ENCODE measurements at regions of chr3 and their contacts with region 1.

Region 1: GRCh38 chr3:189961525-189962161 is 159.1 kb downstream of the P3H2 start:
- DNase-seq: peak; percentile 67
- ATAC-seq: peak; percentile 78
- H3K4me3 ChIP-seq: no peak overlapping the region; a peak in 1 of 6 replicates
- H3K27ac ChIP-seq: no peak overlapping the region
- H3K4me1 ChIP-seq: no peaks in the 10 kb centered on the region
- H3K27me3 ChIP-seq: no peaks in the 10 kb centered on the region
- CTCF ChIP-seq: peak; percentile 90
- EP300 ChIP-seq: peak in 1 of 2 experiments; percentile 76; a peak in 2 of 4 replicates
- POLR2A ChIP-seq: no peak
- RAD21 ChIP-seq: peak; percentile 57; the same call in 1 of the 2 replicates

Region 2: DNA sequence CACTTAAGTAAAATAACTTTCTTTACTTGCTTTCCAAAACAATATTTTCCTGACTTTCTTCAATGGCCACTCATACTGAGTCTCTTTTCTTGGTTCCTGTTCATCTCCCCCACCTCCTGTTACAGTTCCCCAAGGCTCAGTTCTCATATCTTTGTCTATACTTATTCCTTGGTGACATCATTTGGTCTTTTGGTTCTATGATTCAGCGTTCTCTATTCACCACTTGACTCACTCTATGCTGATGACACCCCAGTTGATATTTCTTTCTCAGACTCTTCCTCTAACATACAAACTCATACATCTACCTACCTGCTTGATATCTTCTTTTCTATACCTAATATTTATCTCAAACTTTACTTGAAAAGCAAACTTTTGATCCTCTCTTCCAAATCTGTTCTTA is 244.1 kb after region 1 on chr3:
- CTCF ChIA-PET with region 1: interaction called, 14 read pairs
- POLR2A ChIA-PET with region 1: no interaction called
- in situ Hi-C with region 1: no loop called
- intact Hi-C with region 1: loop called (anchors 1 kb)
- DNase-seq: no peak
- ATAC-seq: no peak
- H3K4me3 ChIP-seq: no peak overlapping the region
- H3K27ac ChIP-seq: no peak overlapping the region
- H3K4me1 ChIP-seq: no peaks in the 10 kb centered on the region
- H3K27me3 ChIP-seq: no peaks in the 10 kb centered on the region; a peak in 1 of 5 replicates
- CTCF ChIP-seq: no peak
- EP300 ChIP-seq: no peak
- POLR2A ChIP-seq: no peak
- RAD21 ChIP-seq: no peak

Region 3: DNA sequence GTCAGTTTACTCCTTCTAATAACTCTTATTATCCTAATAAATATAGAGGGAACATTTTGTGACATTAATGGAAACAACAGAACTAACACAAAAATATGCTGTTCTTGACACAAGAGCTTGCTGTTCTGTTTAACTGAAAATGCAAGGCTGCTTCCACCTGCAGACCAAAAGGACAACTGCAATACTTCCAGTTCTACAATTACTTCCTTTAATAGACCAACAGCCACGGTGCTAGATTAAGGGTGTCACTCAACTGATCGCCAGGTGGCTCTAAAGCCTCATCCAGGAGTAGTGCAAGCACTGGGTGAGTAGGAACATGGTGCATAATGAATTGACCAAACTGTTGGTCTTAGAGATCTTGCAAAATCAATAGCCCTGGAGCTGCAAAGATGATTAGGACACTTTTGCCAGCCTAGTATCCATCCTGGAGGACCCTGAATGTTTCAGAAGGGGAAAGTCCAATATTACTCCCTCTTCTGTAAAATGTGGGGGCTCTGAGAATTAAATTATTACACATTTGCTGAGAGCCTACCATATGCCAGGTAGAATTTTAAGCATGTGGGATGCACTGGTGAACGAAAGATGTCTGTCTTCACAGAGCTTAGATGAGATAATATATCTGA is 422.7 kb after region 1 on chr3:
- CTCF ChIA-PET with region 1: no interaction called
- POLR2A ChIA-PET with region 1: no interaction called
- in situ Hi-C with region 1: no loop called
- intact Hi-C with region 1: loop called (anchors 2 kb)
- DNase-seq: peak; percentile 83
- ATAC-seq: peak; percentile 100
- H3K4me3 ChIP-seq: no peak overlapping the region
- H3K27ac ChIP-seq: no peak overlapping the region
- H3K4me1 ChIP-seq: peaks cover 30% of the 10 kb centered on the region
- H3K27me3 ChIP-seq: 0 out of 5 replicates have a peak, but pooled peaks cover 0 to 1% of the 10 kb centered on the region in 2 experiments
- CTCF ChIP-seq: peak; percentile 89
- EP300 ChIP-seq: no peak
- POLR2A ChIP-seq: no peak
- RAD21 ChIP-seq: peak; percentile 84

Region 4: GRCh38 chr3:190443257-190443656 is 481.6 kb after region 1 on chr3:
- CTCF ChIA-PET with region 1: no interaction called
- POLR2A ChIA-PET with region 1: no interaction called
- in situ Hi-C with region 1: no loop called
- intact Hi-C with region 1: loop called (anchors 5 kb)
- DNase-seq: peak; percentile 13
- ATAC-seq: no peak
- H3K4me3 ChIP-seq: no peak overlapping the region
- H3K27ac ChIP-seq: no peak overlapping the region
- H3K4me1 ChIP-seq: peaks cover 19% of the 10 kb centered on the region
- H3K27me3 ChIP-seq: no peaks in the 10 kb centered on the region
- CTCF ChIP-seq: peak; percentile 34; the same call in 1 of the 2 replicates
- EP300 ChIP-seq: no peak
- POLR2A ChIP-seq: no peak
- RAD21 ChIP-seq: no peak

Region 5: GRCh38 chr3:190701096-190701532 is 739.5 kb after region 1 on chr3:
- CTCF ChIA-PET with region 1: no interaction called
- POLR2A ChIA-PET with region 1: no interaction called
- in situ Hi-C with region 1: loop called (anchors 25 kb)
- intact Hi-C with region 1: loop called (anchors 1 kb)
- DNase-seq: peak; percentile 91
- ATAC-seq: peak; percentile 99
- H3K4me3 ChIP-seq: no peak overlapping the region; a peak in 1 of 6 replicates
- H3K27ac ChIP-seq: no peak overlapping the region
- H3K4me1 ChIP-seq: peaks cover 23% of the 10 kb centered on the region
- H3K27me3 ChIP-seq: no peaks in the 10 kb centered on the region
- CTCF ChIP-seq: peak; percentile 91
- EP300 ChIP-seq: peak in 1 of 2 experiments; percentile 42; a peak in 1 of 4 replicates
- POLR2A ChIP-seq: no peak
- RAD21 ChIP-seq: peak; percentile 71

Measured in HepG2 (cell line).